HepG2 (cell line): ENCODE measurements at regions of chr6 and their contacts with region 1.

Region 1: GRCh38 chr6:24581084-24581669 is 64.8 kb downstream of the KIAA0319 start:
- DNase-seq: peak; percentile 76
- ATAC-seq: peak; percentile 97
- H3K4me3 ChIP-seq: no peak overlapping the region
- H3K27ac ChIP-seq: no peak overlapping the region
- H3K4me1 ChIP-seq: peaks cover 10% of the 10 kb centered on the region
- H3K27me3 ChIP-seq: peaks cover 0 to 22% of the 10 kb centered on the region in 2 experiments; a peak in 4 of 5 replicates
- CTCF ChIP-seq: peak; percentile 94
- EP300 ChIP-seq: no peak
- POLR2A ChIP-seq: no peak
- RAD21 ChIP-seq: peak; percentile 78

Region 2: GRCh38 chr6:24614648-24615047 is 33.5 kb after region 1 on chr6:
- CTCF ChIA-PET with region 1: no interaction called
- POLR2A ChIA-PET with region 1: no interaction called
- in situ Hi-C with region 1: no loop called
- intact Hi-C with region 1: no loop called
- DNase-seq: no peak
- ATAC-seq: no peak
- H3K4me3 ChIP-seq: no peak overlapping the region
- H3K27ac ChIP-seq: no peak overlapping the region
- H3K4me1 ChIP-seq: no peaks in the 10 kb centered on the region
- H3K27me3 ChIP-seq: peaks cover 0 to 12% of the 10 kb centered on the region in 2 experiments; a peak in 3 of 5 replicates
- CTCF ChIP-seq: no peak
- EP300 ChIP-seq: no peak
- POLR2A ChIP-seq: no peak
- RAD21 ChIP-seq: no peak

Region 3: DNA sequence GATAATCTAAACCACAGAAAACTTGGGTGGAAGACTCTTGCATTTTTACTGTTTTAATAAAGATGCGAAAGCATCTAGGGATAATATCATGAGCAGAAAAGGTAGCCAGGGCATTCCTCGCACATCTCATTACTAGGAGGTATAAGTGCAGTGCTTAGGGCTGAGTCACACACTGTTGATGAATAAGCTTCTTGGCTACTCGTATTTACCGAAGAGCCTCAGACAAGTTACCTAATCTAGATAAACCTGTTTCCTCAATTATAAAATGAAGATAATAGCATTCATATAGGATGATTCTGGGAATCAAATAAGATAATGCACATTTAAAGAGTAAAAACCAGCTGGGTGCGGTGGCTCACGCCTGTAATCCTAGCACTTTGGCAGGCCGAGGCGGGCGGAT is 65.6 kb after region 1 on chr6:
- CTCF ChIA-PET with region 1: no interaction called
- POLR2A ChIA-PET with region 1: no interaction called
- in situ Hi-C with region 1: no loop called
- intact Hi-C with region 1: loop called (anchors 5 kb)
- DNase-seq: no peak
- ATAC-seq: no peak
- H3K4me3 ChIP-seq: peak overlapping the region in 1 of 3 experiments; percentile 89; a peak in 1 of 6 replicates
- H3K27ac ChIP-seq: no peak overlapping the region
- H3K4me1 ChIP-seq: peaks cover 29% of the 10 kb centered on the region
- H3K27me3 ChIP-seq: 0 out of 5 replicates have a peak, but pooled peaks cover 0 to 6% of the 10 kb centered on the region in 2 experiments
- CTCF ChIP-seq: no peak
- EP300 ChIP-seq: no peak
- POLR2A ChIP-seq: no peak
- RAD21 ChIP-seq: no peak

Region 4: DNA sequence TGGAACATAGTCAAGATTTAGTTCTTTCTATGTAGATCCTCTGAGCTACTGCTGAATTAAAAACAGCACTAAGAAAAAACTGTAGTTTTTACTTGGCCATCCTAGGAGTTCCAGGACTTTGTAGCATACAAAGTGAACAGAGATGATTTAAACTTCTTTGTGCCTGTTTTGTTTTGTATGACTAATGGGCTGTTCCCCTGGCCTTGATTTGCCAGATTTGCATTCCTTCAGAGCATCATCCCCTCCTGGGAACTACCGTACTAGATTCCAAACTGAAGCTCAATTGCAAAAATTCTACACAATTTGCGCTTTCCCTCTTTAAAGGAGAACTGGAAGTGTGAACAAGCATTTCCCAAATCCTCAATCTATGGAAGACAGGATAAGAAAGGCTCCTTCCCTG is 108.8 kb after region 1 on chr6:
- CTCF ChIA-PET with region 1: interaction called, 105 read pairs
- POLR2A ChIA-PET with region 1: no interaction called
- in situ Hi-C with region 1: loop called (anchors 5 kb)
- intact Hi-C with region 1: loop called (anchors 1 kb)
- DNase-seq: no peak
- ATAC-seq: no peak
- H3K4me3 ChIP-seq: no peak overlapping the region
- H3K27ac ChIP-seq: no peak overlapping the region
- H3K4me1 ChIP-seq: peaks cover 5% of the 10 kb centered on the region; the same call in 1 of the 2 replicates
- H3K27me3 ChIP-seq: no peaks in the 10 kb centered on the region
- CTCF ChIP-seq: no peak
- EP300 ChIP-seq: no peak
- POLR2A ChIP-seq: no peak
- RAD21 ChIP-seq: no peak

Region 5: DNA sequence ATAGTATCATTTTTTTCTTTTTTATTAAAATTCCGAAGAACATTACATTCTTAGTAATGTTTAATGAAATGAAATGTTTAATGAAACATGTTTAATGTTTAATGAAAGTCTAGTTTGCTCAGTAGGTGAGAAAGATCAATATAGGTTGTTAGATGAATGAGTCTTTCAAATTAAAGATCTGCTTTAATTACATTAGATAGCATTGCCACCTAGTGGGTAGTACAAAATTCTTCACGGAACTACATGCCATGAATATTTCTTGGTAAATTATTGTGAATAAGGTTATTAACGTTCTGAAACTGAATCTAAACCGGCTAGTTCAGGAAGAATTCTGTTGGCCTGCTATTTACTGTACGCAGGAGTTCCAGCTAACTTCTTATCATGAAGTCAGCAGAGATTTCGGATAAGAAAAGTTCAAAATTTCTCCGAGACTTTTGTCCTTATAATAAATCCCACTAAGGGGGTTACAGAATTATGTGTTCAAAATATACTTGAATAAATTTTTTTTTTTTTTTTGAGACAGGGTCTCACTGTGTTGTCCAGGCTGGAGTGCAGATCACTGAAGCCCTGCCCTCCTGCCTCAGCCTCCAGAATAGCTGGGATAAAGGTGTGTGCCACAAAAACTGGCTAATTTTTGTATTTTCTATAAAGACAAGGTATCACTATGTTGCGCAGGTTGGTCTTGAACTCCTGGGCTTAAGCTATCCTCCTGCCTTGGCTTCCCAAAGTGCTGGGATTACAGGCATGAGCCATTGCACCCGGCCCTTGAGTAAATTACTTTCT is 185.7 kb after region 1 on chr6:
- CTCF ChIA-PET with region 1: interaction called, 5 read pairs
- POLR2A ChIA-PET with region 1: no interaction called
- in situ Hi-C with region 1: loop called (anchors 5 kb)
- intact Hi-C with region 1: loop called (anchors 1 kb)
- DNase-seq: no peak
- ATAC-seq: no peak
- H3K4me3 ChIP-seq: no peak overlapping the region
- H3K27ac ChIP-seq: no peak overlapping the region
- H3K4me1 ChIP-seq: peaks cover 43% of the 10 kb centered on the region
- H3K27me3 ChIP-seq: no peaks in the 10 kb centered on the region
- CTCF ChIP-seq: peak; percentile 50
- EP300 ChIP-seq: no peak
- POLR2A ChIP-seq: no peak
- RAD21 ChIP-seq: no peak

Region 6: DNA sequence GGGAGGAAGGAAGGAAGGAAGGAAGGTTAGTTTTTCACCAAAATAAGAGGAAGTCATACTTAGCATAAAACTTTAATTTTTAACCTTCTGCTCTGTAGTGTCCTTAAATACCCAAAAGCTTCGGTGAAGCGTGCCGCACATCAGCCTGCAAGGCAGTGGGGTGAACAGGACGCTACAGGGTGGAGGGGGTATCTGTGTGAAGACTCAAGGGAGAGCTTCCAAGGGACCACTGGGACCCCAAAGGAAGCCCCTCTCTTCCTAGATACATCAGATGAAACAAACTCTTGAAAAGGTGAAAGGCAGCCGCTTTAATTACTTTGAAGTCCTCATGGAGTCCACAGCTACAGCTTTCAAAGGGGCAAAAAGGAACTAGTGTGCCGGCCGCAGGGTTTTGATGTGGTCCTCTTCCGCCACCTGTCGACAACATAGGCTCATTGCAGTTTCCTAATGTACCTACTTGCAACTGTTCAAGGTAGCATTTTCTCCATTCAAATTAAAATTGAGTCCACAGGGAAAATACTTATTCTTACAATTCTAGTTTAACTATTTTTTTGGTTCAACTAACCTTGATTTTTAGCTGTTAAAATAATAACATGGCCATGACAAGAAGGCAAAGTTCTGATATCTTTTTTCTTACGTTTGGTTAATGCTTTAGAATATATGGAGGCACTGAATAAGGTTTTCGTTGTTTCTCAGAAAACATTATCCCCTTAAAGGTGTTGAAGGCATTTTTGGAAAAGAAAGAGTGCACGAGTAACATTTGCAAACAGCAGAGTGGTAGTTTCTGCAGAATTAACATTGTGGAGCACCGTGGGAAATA is 489.6 kb after region 1 on chr6:
- CTCF ChIA-PET with region 1: interaction called, 4 read pairs
- POLR2A ChIA-PET with region 1: no interaction called
- in situ Hi-C with region 1: loop called (anchors 25 kb)
- intact Hi-C with region 1: no loop called
- DNase-seq: peak; percentile 68
- ATAC-seq: peak; percentile 94
- H3K4me3 ChIP-seq: no peak overlapping the region
- H3K27ac ChIP-seq: no peak overlapping the region
- H3K4me1 ChIP-seq: no peaks in the 10 kb centered on the region
- H3K27me3 ChIP-seq: 0 out of 5 replicates have a peak, but pooled peaks cover 0 to 3% of the 10 kb centered on the region in 2 experiments
- CTCF ChIP-seq: peak; percentile 90
- EP300 ChIP-seq: no peak
- POLR2A ChIP-seq: no peak
- RAD21 ChIP-seq: peak; percentile 87